ENCODE measurements at regions of chr6 and their contacts with region 1.

Region 1: GRCh38 chr6:34154668-34155447 is 9.0 kb upstream of the GRM4 start:
- DNase-seq: peak in 1 of 2 donors; percentile 60
- H3K4me3 ChIP-seq: peak overlapping the region in 2 of 3 donors; percentile 32 to 58
- H3K27ac ChIP-seq: no peak overlapping the region
- H3K4me1 ChIP-seq: peaks cover 0 to 5% of the 10 kb centered on the region in 2 donors
- H3K27me3 ChIP-seq: peaks cover 0 to 37% of the 10 kb centered on the region in 2 donors
- CTCF ChIP-seq: peak; percentile 83 to 97 (median 93)
- POLR2A ChIP-seq: no peak

Region 2: GRCh38 chr6:33768644-33769120 is 386.2 kb before region 1 on chr6:
- intact Hi-C with region 1: loop called (anchors 10 kb)
- DNase-seq: peak; percentile 59 to 83
- H3K4me3 ChIP-seq: no peak overlapping the region
- H3K27ac ChIP-seq: no peak overlapping the region
- H3K4me1 ChIP-seq: peaks cover 20 to 23% of the 10 kb centered on the region in 2 donors
- H3K27me3 ChIP-seq: no peaks in the 10 kb centered on the region
- CTCF ChIP-seq: peak; percentile 53 to 73 (median 53)
- POLR2A ChIP-seq: no peak

Region 3: GRCh38 chr6:34771727-34772126 is 616.9 kb after region 1 on chr6:
- intact Hi-C with region 1: no loop called
- DNase-seq: no peak
- H3K4me3 ChIP-seq: no peak overlapping the region
- H3K27ac ChIP-seq: no peak overlapping the region
- H3K4me1 ChIP-seq: no peaks in the 10 kb centered on the region
- H3K27me3 ChIP-seq: no peaks in the 10 kb centered on the region
- CTCF ChIP-seq: no peak
- POLR2A ChIP-seq: no peak

Measured in breast epithelium (tissue), 4 donors.